Caco-2 (cell line): ENCODE measurements at regions of chr12 and their contacts with region 1.

Region 1: DNA sequence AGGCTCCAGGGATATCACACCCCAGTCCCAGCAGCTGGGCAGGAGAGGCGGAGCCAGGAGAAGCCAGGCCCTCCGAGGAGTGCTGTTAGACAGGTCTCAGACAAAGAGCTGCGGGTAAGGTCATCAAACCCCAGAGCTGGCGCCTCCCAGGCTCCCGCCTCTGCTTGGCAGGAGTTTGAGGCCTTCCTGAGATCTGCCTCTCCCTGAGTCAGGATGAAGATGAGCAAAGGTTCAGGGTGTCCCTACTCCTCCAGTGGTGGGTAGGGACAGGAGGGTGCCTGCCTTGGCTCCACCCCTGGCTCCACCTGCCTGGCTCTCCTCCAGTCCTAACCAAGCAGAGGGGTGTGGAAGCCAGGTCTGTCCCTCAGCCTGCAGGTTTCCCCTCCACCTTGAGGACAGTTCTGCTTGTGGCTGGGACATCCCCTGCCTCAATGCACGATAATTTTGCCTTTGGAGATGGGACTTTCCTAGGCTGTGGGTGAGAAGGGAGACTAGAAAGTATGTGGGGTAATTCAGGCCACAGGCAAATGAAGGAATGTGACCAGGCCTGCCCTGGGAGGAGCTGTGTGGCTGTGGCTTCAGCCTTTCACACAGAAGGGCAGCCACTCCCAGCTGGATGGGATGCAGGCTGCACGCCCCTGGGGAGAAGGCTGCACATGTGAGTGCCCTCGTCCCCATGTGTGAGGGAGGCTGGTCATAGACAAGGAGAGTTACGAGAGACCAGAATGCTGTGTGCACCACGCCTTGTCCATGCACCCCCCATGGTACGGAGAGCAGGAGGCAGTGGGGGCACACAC is 2.2 kb downstream of the PLEKHG6 start:
- DNase-seq: peak; percentile 84 to 86
- H3K4me3 ChIP-seq: no peak overlapping the region
- H3K4me3 Mint-ChIP-seq: peak overlapping the region; percentile 79
- H3K27ac Mint-ChIP-seq: peak overlapping the region; percentile 83
- H3K4me1 ChIP-seq: peaks cover 64% of the 10 kb centered on the region
- H3K4me1 Mint-ChIP-seq: peaks cover 45% of the 10 kb centered on the region
- H3K27me3 ChIP-seq: no peaks in the 10 kb centered on the region
- H3K27me3 Mint-ChIP-seq: no peaks in the 10 kb centered on the region
- CTCF ChIP-seq: no peak

Region 2: GRCh38 chr12:4857472-4858291 is 1455.0 kb before region 1 on chr12:
- CTCF ChIA-PET with region 1: interaction called, 10 read pairs
- POLR2A ChIA-PET with region 1: no interaction called
- intact Hi-C with region 1: no loop called
- DNase-seq: peak; percentile 74 to 87
- H3K4me3 ChIP-seq: 0 out of 2 replicates have a peak overlapping the region, but pooled peaks have one; percentile 6
- H3K4me3 Mint-ChIP-seq: peak overlapping the region; percentile 44
- H3K27ac Mint-ChIP-seq: no peak overlapping the region
- H3K4me1 ChIP-seq: 0 out of 2 replicates have a peak, but pooled peaks cover 3% of the 10 kb centered on the region
- H3K4me1 Mint-ChIP-seq: peaks cover 7% of the 10 kb centered on the region
- H3K27me3 ChIP-seq: no peaks in the 10 kb centered on the region; the same call in 1 of the 2 replicates
- H3K27me3 Mint-ChIP-seq: peaks cover 35% of the 10 kb centered on the region
- CTCF ChIP-seq: peak; percentile 94 to 97

Region 3: GRCh38 chr12:6230321-6231110 is 82.2 kb before region 1 on chr12:
- CTCF ChIA-PET with region 1: no interaction called
- POLR2A ChIA-PET with region 1: interaction called, 13 read pairs
- intact Hi-C with region 1: no loop called
- DNase-seq: no peak
- H3K4me3 ChIP-seq: no peak overlapping the region
- H3K4me3 Mint-ChIP-seq: peak overlapping the region; percentile 58
- H3K27ac Mint-ChIP-seq: peak overlapping the region; percentile 96
- H3K4me1 ChIP-seq: peaks cover 81% of the 10 kb centered on the region
- H3K4me1 Mint-ChIP-seq: peaks cover 78% of the 10 kb centered on the region
- H3K27me3 ChIP-seq: no peaks in the 10 kb centered on the region
- H3K27me3 Mint-ChIP-seq: no peaks in the 10 kb centered on the region
- CTCF ChIP-seq: no peak

Region 4: DNA sequence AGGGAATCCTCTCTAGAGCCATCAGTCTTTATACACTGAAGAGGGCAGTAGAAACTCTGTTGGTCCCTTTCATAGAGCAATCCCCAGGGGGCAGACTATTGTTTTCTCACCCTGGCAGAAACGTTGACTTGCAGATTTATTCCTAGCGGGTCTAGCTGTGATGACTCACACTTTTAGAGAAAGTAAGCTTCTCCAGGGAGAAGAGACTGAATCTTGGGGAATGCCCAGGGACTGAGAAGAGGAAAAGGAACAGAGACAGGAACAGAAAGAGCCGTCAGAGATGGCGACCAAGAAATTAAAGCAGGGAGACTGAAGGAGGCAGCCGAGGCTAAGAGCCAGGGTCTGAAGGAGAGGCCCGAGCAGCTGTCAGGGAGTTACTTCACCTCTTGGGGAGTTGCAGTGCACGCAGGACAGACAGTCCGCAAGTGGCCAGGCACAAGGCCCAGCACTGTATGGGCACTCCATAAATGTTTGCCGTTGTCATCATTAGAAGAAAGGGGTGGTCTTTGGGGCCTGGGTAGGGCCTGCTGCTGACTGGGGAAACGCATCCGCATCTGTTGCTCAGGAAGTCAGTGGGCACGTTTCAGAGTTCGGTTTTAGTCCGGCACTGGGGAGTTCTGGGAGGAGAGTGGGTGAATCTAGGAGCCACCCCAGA is 10.7 kb after region 1 on chr12:
- CTCF ChIA-PET with region 1: interaction called, 11 read pairs
- POLR2A ChIA-PET with region 1: interaction called, 4 read pairs
- intact Hi-C with region 1: loop called (anchors 1 kb)
- DNase-seq: peak; percentile 70 to 80
- H3K4me3 ChIP-seq: no peak overlapping the region
- H3K4me3 Mint-ChIP-seq: no peak overlapping the region
- H3K27ac Mint-ChIP-seq: peak overlapping the region; percentile 88
- H3K4me1 ChIP-seq: peaks cover 20% of the 10 kb centered on the region
- H3K4me1 Mint-ChIP-seq: peaks cover 19% of the 10 kb centered on the region
- H3K27me3 ChIP-seq: no peaks in the 10 kb centered on the region
- H3K27me3 Mint-ChIP-seq: no peaks in the 10 kb centered on the region
- CTCF ChIP-seq: peak; percentile 61 to 87

Region 5: GRCh38 chr12:6367065-6367968 is 54.6 kb after region 1 on chr12:
- CTCF ChIA-PET with region 1: interaction called, 5 read pairs
- POLR2A ChIA-PET with region 1: interaction called, 3 read pairs
- intact Hi-C with region 1: loop called (anchors 1 kb)
- DNase-seq: peak in 1 of 2 experiments; percentile 29
- H3K4me3 ChIP-seq: no peak overlapping the region
- H3K4me3 Mint-ChIP-seq: no peak overlapping the region
- H3K27ac Mint-ChIP-seq: peak overlapping the region; percentile 12
- H3K4me1 ChIP-seq: peaks cover 25% of the 10 kb centered on the region
- H3K4me1 Mint-ChIP-seq: peaks cover 38% of the 10 kb centered on the region
- H3K27me3 ChIP-seq: no peaks in the 10 kb centered on the region
- H3K27me3 Mint-ChIP-seq: no peaks in the 10 kb centered on the region
- CTCF ChIP-seq: peak in 1 of 2 experiments; percentile 1

Region 6: DNA sequence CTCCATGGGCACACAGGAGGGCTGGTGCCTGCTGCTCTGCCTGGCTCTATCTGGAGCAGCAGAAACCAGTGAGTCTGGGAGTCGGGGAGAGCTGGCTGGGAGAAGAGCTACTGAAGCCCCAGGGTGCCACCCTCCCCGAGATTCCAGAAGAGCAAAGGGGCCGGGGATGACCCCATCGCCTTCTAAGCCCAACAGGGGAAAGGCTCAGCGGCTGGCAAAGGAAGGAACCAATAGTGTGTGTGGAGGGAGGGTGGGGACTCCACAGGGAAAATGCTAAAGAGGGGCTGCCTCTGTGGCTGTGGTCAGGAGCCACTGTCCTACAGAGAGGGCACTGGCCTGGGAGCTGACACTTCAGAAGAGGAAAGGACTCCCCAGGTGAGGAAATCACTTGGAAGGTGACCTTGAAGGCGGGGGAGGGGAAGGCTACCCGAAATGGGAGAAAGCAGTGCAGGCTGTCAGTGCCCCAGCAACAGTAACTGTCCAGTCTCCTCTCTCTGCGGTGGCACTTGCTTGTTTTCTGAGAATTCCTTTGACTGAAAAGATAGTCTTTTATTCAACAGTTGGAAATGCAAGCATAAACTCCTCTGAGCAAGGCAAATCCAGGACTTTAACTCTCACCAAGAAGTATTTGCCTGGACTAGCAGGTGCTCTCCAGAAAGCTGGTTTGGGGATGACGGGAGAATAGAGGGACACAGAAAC is 139.7 kb after region 1 on chr12:
- CTCF ChIA-PET with region 1: no interaction called
- POLR2A ChIA-PET with region 1: no interaction called
- intact Hi-C with region 1: no loop called
- DNase-seq: peak; percentile 43 to 45
- H3K4me3 ChIP-seq: peak overlapping the region; percentile 82
- H3K4me3 Mint-ChIP-seq: peak overlapping the region; percentile 79
- H3K27ac Mint-ChIP-seq: peak overlapping the region; percentile 93
- H3K4me1 ChIP-seq: peaks cover 9% of the 10 kb centered on the region; the same call in 1 of the 2 replicates
- H3K4me1 Mint-ChIP-seq: peaks cover 4% of the 10 kb centered on the region
- H3K27me3 ChIP-seq: no peaks in the 10 kb centered on the region
- H3K27me3 Mint-ChIP-seq: no peaks in the 10 kb centered on the region
- CTCF ChIP-seq: no peak

Region 7: DNA sequence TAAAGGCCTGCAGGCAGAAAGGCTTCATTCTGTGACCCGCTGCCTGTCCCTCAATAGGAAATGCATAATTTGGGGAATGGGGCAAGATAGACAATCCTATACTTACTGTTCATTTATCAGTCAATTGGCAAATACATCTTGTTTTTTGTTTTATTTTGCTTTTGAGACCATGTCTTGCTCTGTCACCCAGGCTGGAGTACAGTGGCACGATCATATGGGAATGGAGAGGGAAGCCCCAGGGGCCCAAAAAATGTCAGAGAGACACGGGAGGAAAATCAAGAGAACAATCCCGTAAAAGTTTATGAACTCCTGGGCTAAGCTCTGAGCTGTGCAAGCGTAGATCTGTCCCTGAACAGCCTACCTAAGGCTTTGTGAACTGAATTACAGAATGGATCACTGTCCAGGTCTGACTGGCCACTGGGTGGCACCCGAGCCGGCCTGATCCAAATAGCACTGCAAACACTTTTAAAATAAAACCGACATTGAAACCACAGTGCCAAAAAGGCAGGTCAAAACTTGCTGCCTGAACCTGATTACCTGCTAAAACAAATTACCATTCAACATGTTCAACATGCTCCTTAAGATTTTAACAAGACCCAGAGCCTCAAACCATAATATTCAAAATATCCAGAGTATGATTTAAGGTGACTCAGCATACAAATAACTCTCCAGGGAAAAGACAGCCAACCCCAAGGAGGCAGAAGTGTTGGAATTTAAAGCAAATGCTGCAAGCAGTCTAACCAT is 422.9 kb after region 1 on chr12:
- CTCF ChIA-PET with region 1: no interaction called
- POLR2A ChIA-PET with region 1: no interaction called
- intact Hi-C with region 1: no loop called
- DNase-seq: peak; percentile 70 to 81
- H3K4me3 ChIP-seq: no peak overlapping the region
- H3K4me3 Mint-ChIP-seq: no peak overlapping the region
- H3K27ac Mint-ChIP-seq: peak overlapping the region; percentile 24
- H3K4me1 ChIP-seq: no peaks in the 10 kb centered on the region
- H3K4me1 Mint-ChIP-seq: peaks cover 8% of the 10 kb centered on the region
- H3K27me3 ChIP-seq: no peaks in the 10 kb centered on the region
- H3K27me3 Mint-ChIP-seq: no peaks in the 10 kb centered on the region
- CTCF ChIP-seq: peak; percentile 94